Naive thymus-derived CD4-positive, alpha-beta T cell (primary cell): ENCODE measurements at regions of chr6 and their contacts with region 1.

Region 1: DNA sequence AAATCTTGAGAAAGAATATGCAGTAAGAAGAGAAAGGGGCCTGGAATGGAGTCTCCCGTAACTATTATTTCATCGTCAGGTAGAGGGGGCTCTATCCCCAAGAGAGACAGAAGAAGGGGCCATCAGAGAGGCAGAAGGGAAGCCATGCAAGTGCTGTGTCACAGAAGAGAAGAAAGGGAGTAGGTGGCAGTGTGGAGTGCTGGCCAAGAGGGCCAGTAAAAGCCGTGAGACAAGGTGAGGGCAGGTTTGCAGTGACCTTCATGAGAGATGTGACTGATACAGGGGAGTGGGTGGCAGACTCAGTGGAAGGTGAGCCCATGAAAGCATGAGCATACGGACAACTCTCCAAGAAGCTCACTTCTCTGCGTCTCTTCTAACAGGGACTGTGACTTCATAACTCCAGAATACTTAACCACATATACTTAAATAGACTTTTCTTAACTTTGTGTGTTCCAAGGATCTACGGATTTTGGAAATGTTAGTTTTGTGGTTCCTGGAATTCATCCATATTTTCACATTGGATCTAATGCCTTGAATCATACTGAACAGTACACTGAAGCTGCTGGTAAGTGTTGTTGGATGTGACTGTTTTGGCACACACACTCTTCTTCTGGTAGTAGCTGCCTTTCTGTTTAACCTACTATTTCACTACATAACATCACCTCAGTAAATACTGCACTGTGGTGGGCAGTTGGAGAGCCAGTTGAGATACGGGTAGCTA is 15.6 kb downstream of the PM20D2 start:
- DNase-seq: no peak
- ATAC-seq: no peak
- H3K4me3 ChIP-seq: no peak overlapping the region
- H3K4me3 Mint-ChIP-seq: no peak overlapping the region
- H3K27ac ChIP-seq: no peak overlapping the region
- H3K27ac Mint-ChIP-seq: peak overlapping the region in 3 of 9 donors; percentile 13 to 48 (median 14)
- H3K4me1 ChIP-seq: no peaks in the 10 kb centered on the region
- H3K4me1 Mint-ChIP-seq: no peaks in the 10 kb centered on the region
- H3K27me3 ChIP-seq: no peaks in the 10 kb centered on the region
- H3K27me3 Mint-ChIP-seq: no peaks in the 10 kb centered on the region

Region 2: GRCh38 chr6:89145787-89146646 is 15.5 kb before region 1 on chr6 and contains the start of gene PM20D2:
- CTCF ChIA-PET with region 1: no interaction called
- POLR2A ChIA-PET with region 1: interaction called, 5 read pairs
- intact Hi-C with region 1: loop called in 1 of 2 experiments (anchors 2 kb)
- DNase-seq: peak; percentile 45 to 78 (median 59)
- ATAC-seq: peak; percentile 84
- H3K4me3 ChIP-seq: peak within 1 kb of the TSS; percentile 58
- H3K4me3 Mint-ChIP-seq: peak within 1 kb of the TSS; percentile 86 to 99 (median 94)
- H3K27ac ChIP-seq: peak within 1 kb of the TSS; percentile 73
- H3K27ac Mint-ChIP-seq: peak within 1 kb of the TSS; percentile 84 to 98 (median 95)
- H3K4me1 ChIP-seq: peaks cover 5 to 10% of the 10 kb centered on the region in 2 donors
- H3K4me1 Mint-ChIP-seq: peaks cover 16 to 39% (median 23%) of the 10 kb centered on the region in 7 donors
- H3K27me3 ChIP-seq: no peaks in the 10 kb centered on the region
- H3K27me3 Mint-ChIP-seq: peaks cover 0 to 14% (median 0%) of the 10 kb centered on the region in 5 donors
- total RNA-seq, gene PM20D2: 4.6 to 12.7 (median 9.5) TPM

Region 3: GRCh38 chr6:89281779-89282246 is 120.3 kb after region 1 on chr6:
- CTCF ChIA-PET with region 1: no interaction called
- POLR2A ChIA-PET with region 1: no interaction called
- intact Hi-C with region 1: no loop called
- DNase-seq: peak in 2 of 9 donors; percentile 9 to 35
- ATAC-seq: peak; percentile 87
- H3K4me3 ChIP-seq: no peak overlapping the region
- H3K4me3 Mint-ChIP-seq: no peak overlapping the region
- H3K27ac ChIP-seq: no peak overlapping the region
- H3K27ac Mint-ChIP-seq: no peak overlapping the region
- H3K4me1 ChIP-seq: no peaks in the 10 kb centered on the region
- H3K4me1 Mint-ChIP-seq: peaks cover 0 to 7% (median 0%) of the 10 kb centered on the region in 7 donors
- H3K27me3 ChIP-seq: no peaks in the 10 kb centered on the region
- H3K27me3 Mint-ChIP-seq: peaks cover 0 to 9% (median 0%) of the 10 kb centered on the region in 5 donors